ENCODE measurements at regions of chr6 and their contacts with region 1.

Region 1: DNA sequence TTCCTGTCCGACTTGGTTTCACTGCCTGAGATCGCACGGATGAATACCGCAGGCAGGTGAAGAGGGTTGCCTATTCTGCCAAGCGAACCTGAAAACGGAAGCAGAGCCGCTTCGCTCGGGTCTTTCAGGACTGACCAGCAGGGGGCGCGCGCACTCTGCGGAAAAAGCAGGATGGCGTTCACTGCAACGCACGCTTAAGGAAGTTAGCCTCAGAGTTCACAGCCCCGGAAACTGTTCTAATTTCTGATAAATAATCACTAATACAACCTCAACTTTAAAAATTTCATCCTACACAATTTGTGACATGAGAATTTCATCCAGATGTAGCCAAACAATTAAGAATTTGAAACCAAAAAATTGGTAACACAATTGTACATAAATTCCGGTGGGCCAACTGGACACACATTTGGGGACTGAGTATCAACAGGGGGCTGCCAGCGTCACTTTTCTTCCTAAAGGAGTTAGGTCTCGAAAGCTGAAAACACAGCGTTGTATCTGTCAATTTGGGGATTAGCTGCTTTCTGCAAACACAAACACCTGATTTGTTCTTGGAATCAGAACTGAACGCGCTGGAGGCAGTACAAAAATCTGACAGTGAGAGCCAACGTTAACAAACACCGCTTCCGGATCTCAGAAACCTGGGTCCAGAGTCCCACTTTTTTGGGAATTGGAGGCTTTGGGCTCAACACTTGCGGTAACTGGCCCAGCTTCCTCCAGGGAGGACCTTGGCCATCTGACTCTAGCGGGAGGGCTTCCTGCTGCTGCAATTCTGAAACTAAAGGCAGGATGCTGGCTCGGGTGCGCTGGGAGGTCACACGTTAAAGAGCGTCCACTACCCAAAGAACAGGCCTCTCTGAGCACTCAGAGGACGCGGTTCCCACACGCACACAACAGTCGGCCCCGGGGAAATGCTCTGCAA is 8.8 kb downstream of the PXDC1 start:
- DNase-seq: peak; percentile 73 to 92 (median 85)
- H3K4me3 ChIP-seq: peak overlapping the region in 55 of 59 donors; percentile 1 to 59 (median 31)
- H3K27ac ChIP-seq: peak overlapping the region in 56 of 59 donors; percentile 0 to 82 (median 62)
- H3K27me3 ChIP-seq: no peaks in the 10 kb centered on the region
- CTCF ChIP-seq: peak; percentile 93 to 100 (median 98)

Region 2: DNA sequence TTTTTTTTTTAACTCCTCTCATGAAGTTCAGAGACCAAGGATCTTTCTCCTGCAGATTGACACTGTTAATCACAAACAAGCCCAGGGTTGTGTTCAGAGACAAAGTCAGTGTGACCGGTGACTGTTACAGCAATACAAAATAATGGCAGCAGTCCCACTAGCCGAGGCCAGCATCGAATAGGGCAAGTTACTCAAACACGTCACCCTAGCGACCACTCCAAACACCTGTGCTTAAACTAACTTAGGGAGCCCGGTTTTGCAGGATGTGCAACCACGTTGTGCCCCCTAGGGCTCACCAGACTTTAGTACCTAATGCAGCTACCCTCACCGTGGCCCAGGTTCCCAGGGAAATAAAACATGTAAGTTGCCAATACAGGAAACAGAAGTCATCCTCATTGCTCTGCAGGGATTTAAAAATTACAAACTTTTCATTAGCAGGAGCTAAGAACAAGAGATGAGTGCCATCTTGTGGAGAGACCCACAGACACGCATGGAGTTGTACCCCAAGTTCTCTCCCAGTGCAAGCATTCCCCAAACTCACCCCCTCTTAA is 144.5 kb after region 1 on chr6:
- intact Hi-C with region 1: loop called (anchors 2 to 5 kb)
- DNase-seq: no peak
- H3K4me3 ChIP-seq: no peak overlapping the region
- H3K27ac ChIP-seq: no peak overlapping the region
- H3K27me3 ChIP-seq: no peaks in the 10 kb centered on the region
- CTCF ChIP-seq: peak in 55 of 56 donors; percentile 35 to 77 (median 62)

Region 3: DNA sequence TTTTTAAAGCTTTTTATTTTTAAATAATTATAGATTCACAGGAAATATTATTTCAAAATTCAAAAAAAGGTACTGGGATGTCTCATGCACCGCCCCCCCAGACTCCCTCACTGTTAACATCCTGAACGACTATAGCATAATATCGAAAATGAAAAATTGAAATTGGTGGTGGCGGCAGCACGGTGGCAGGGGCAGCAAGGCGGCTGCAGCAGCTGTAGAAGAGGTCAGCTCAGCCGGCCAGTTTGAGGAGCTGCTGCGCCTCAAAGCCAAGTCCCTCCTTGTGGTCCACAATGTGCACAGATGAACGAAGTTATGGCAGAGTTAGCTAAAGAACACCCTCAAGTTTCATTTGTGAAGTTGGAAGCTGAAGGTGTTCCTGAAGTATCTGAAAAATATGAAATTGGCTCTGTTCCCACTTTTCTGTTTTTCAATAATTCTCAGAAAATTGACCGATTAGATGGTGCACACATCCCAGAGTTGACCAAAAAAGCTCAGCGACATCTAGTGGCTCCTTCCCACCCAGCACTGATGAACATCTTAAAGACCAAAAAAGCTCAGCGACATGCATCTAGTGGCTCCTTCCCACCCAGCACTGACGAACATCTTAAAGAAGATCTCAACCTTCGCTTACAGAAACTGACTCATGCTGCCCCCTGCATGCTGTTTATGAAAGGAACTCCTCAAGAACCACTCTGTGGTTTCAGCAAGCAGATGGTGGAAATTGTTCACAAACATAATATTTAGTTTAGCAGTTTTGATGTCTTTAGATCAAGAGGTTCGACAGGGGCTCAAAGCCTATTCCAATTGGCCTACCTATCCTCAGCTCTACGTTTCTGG is 235.4 kb after region 1 on chr6:
- intact Hi-C with region 1: no loop called
- DNase-seq: peak in 6 of 10 donors; percentile 6 to 67 (median 42)
- H3K4me3 ChIP-seq: no peak overlapping the region
- H3K27ac ChIP-seq: no peak overlapping the region
- H3K27me3 ChIP-seq: no peaks in the 10 kb centered on the region
- CTCF ChIP-seq: peak; percentile 43 to 81 (median 69)

Region 4: DNA sequence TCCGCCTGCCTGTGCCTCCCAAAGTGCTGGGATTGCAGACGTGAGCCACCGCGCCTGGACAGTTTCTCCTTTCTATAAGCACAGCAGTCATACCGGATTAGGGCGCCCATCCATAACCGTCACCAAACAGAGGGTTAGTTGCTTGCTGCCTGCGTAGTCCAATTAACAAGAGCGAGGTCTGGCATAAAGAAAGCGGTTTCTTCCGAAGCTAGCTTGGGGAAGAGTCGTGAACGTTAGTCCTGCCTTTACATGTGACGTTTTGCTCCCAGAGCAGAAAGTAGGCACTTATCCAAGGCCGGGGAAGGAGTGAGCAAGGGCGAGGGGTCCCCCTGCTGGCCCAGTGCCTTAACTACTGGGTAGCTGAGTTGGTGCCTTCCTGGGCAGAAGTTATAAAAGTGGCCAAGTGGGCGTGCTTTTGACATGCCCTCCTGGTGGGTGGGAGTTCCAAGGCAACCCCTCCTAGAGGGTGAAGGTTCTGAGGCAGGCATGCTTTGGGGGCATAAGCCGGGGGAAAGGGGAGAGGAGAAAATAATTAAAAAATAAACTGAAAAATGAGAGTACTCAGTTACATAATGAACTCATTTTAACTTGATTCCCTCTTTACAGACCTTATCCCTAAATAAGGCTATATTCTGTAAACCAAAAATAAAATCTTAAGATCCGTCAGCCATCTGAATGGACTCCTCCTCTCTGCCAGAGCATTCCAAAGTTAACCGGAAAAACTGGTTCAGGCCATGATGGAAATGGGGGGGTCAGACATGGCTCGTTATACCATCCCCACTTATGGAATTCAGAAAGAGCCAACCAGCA is 248.2 kb after region 1 on chr6:
- intact Hi-C with region 1: loop called (anchors 2 kb)
- DNase-seq: peak; percentile 77 to 91 (median 87)
- H3K4me3 ChIP-seq: peak overlapping the region; percentile 36 to 72 (median 59)
- H3K27ac ChIP-seq: peak overlapping the region in 44 of 59 donors; percentile 9 to 83 (median 67)
- H3K27me3 ChIP-seq: no peaks in the 10 kb centered on the region
- CTCF ChIP-seq: peak; percentile 39 to 93 (median 84)

Region 5: GRCh38 chr6:4135665-4136353 is 393.1 kb after region 1 on chr6:
- intact Hi-C with region 1: loop called in 1 of 2 experiments (anchors 5 kb)
- DNase-seq: peak; percentile 93 to 100 (median 98)
- H3K4me3 ChIP-seq: peak overlapping the region; percentile 62 to 98 (median 88)
- H3K27ac ChIP-seq: peak overlapping the region; percentile 7 to 95 (median 89)
- H3K27me3 ChIP-seq: no peaks in the 10 kb centered on the region
- CTCF ChIP-seq: peak in 32 of 56 donors; percentile 5 to 49 (median 25)

Region 6: DNA sequence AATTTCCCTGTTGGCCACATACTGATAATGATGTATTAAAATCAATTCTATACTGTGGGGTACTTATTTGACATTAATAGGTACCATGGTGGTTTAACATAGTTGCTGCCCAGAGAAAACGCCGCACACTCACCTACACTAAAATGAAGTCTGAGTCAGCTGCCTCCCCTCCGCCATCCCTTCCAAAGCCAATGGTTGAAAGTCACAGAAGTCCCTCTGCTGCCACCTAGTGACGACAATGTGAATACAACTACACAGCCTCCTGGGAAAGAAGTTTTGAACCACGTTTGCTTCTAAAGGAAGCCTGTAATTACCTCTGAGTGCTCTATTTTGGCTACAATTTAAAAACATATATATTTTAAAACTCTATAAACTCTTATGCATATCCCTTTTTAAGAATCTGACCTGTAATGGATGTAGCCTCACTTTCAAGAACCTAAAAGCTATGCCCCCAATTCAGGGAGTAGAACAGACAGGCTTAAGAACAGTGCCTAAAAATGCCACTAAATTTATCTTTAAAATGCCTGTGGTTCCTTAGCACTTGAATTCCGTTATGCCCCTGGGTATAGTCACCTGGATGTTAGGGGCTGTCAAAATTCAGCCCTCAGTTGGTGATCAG is 413.3 kb after region 1 on chr6:
- intact Hi-C with region 1: loop called in 1 of 2 experiments (anchors 10 kb)
- DNase-seq: peak in 9 of 10 donors; percentile 58 to 90 (median 75)
- H3K4me3 ChIP-seq: peak overlapping the region in 17 of 59 donors; percentile 6 to 45 (median 23)
- H3K27ac ChIP-seq: peak overlapping the region in 2 of 59 donors; percentile 10 to 31
- H3K27me3 ChIP-seq: no peaks in the 10 kb centered on the region
- CTCF ChIP-seq: peak; percentile 83 to 97 (median 92)

Measured in dorsolateral prefrontal cortex (tissue), 120 donors.